Activated naive CD4-positive, alpha-beta T cell treated with anti-CD3 and anti-CD28 coated beads for 36 hours (primary cell): ENCODE measurements at regions of chr14 and their contacts with region 1.

Region 1: GRCh38 chr14:71555654-71556559 is 376.3 kb upstream of the RGS6 start:
- DNase-seq: peak; percentile 80
- H3K4me3 Mint-ChIP-seq: peak overlapping the region; percentile 56
- H3K27ac Mint-ChIP-seq: peak overlapping the region; percentile 93
- H3K4me1 Mint-ChIP-seq: peaks cover 71% of the 10 kb centered on the region
- H3K27me3 Mint-ChIP-seq: no peaks in the 10 kb centered on the region

Region 2: GRCh38 chr14:70655110-70655826 is 900.6 kb before region 1 on chr14:
- CTCF ChIA-PET with region 1: no interaction called
- intact Hi-C with region 1: loop called (anchors 10 kb)
- DNase-seq: peak; percentile 92
- H3K4me3 Mint-ChIP-seq: peak overlapping the region; percentile 83
- H3K27ac Mint-ChIP-seq: peak overlapping the region; percentile 98
- H3K4me1 Mint-ChIP-seq: peaks cover 81% of the 10 kb centered on the region
- H3K27me3 Mint-ChIP-seq: no peaks in the 10 kb centered on the region

Region 3: GRCh38 chr14:71290960-71291466 is 264.9 kb before region 1 on chr14:
- CTCF ChIA-PET with region 1: interaction called, 3 read pairs
- intact Hi-C with region 1: loop called (anchors 1 kb)
- DNase-seq: peak; percentile 67
- H3K4me3 Mint-ChIP-seq: no peak overlapping the region
- H3K27ac Mint-ChIP-seq: no peak overlapping the region
- H3K4me1 Mint-ChIP-seq: peaks cover 16% of the 10 kb centered on the region
- H3K27me3 Mint-ChIP-seq: no peaks in the 10 kb centered on the region

Region 4: DNA sequence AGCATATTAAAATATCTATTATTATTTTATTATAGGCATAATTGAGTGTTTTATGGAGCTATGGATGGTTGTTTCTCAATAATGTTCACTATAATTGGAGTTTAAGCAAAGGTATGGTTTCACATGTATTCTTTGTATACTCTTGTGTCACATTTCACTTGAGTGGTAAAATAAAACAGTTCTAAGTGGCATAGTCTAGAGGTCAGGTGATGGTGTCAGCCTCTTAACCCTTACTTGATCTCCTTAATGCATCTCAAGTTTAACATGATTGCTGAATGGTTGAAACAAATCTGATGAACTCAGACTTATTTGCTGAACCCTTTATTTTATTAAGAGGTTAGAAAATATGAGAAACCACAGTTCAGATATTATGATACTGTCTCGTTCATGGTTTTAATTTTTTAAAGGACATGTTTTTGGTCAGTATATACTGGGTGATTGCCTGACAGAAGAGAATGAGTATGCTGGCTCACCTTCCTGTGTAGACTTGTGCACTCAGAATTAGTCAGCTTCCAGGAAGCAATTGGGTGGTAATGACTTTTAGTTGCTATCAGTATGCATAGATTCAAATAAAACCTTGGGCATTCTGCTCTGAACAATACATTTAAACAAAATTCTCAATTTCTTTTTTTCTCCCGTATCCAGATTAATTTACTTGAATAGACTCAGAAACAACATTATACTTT is 184.1 kb before region 1 on chr14:
- CTCF ChIA-PET with region 1: no interaction called
- intact Hi-C with region 1: loop called (anchors 2 kb)
- DNase-seq: peak; percentile 43
- H3K4me3 Mint-ChIP-seq: no peak overlapping the region
- H3K27ac Mint-ChIP-seq: no peak overlapping the region
- H3K4me1 Mint-ChIP-seq: peaks cover 21% of the 10 kb centered on the region
- H3K27me3 Mint-ChIP-seq: no peaks in the 10 kb centered on the region

Region 5: GRCh38 chr14:71410578-71411284 is 145.2 kb before region 1 on chr14:
- CTCF ChIA-PET with region 1: no interaction called
- intact Hi-C with region 1: loop called (anchors 1 kb)
- DNase-seq: no peak
- H3K4me3 Mint-ChIP-seq: no peak overlapping the region
- H3K27ac Mint-ChIP-seq: peak overlapping the region; percentile 60
- H3K4me1 Mint-ChIP-seq: peaks cover 42% of the 10 kb centered on the region
- H3K27me3 Mint-ChIP-seq: no peaks in the 10 kb centered on the region

Region 6: DNA sequence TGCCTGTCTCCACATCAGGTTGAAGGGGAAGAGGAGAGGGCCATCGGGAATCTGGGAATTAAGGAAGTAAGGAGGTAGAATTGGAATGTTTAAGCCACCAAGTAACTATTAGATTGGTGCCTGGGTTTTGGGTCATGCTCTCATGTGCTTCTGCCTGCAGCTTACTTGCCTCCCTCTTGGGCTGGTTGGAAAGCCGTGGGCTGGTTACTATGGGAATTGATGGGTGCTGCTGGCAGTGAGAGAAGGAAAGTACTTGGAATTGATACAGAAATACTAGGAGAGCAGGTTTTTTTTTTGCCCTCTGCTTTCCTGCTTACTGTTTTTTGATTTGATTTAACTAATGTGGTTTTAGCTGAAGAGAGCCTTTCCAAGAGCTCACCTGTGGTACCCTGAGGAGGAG is 117.2 kb before region 1 on chr14:
- CTCF ChIA-PET with region 1: no interaction called
- intact Hi-C with region 1: no loop called
- DNase-seq: no peak
- H3K4me3 Mint-ChIP-seq: no peak overlapping the region
- H3K27ac Mint-ChIP-seq: no peak overlapping the region
- H3K4me1 Mint-ChIP-seq: peaks cover 4% of the 10 kb centered on the region
- H3K27me3 Mint-ChIP-seq: no peaks in the 10 kb centered on the region

Region 7: DNA sequence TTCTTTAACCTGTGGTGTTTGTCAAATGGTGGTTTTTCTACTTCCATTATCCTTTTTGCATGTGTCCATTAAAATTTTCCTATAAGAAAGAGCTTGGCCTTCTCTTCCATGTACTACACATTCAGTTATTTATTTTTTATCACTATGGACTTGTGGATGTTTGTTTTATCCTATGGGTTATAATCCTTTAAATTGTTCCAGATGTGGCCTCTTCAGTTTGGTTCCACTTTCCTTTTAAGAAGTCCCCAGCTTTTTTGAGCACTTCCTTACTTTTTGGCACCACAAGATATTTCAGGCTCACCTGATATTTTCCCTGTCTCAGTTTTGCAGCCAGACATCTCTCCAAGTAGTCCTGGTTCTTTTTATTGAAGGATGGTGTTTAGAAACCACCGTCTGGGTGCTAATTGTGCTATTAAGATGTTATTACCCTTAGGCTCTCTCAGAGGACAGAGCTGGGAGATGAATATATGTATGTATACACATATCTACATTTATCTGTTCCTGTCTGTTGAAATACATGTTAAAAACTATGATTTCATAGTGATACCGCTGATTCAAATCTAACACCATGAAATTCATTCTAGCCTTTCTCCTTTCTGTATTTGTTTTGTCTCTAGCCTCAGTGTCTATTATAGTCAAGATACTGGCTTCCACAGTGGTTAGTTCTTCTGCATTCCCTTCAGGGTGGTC is 32.1 kb before region 1 on chr14:
- CTCF ChIA-PET with region 1: interaction called, 3 read pairs
- intact Hi-C with region 1: loop called (anchors 1 kb)
- DNase-seq: no peak
- H3K4me3 Mint-ChIP-seq: no peak overlapping the region
- H3K27ac Mint-ChIP-seq: no peak overlapping the region
- H3K4me1 Mint-ChIP-seq: peaks cover 19% of the 10 kb centered on the region
- H3K27me3 Mint-ChIP-seq: no peaks in the 10 kb centered on the region

Region 8: DNA sequence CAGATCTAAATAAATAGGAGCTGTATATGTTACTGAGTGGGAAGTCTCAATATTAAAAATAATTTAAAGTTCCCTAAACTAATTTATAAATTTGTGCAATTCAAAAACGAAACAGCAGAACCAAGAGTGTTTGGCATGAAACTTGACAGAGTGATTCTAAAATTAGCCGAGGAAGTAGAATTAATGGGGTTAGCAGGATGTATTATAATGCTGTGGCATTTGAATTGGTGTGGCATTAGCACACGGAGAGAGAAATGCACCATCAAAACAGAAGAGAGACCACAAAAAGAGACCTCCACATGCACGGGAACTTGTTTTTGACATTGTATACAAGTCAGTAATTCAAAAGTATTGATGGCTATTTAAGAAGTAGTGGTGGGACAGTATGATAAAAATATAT is 10.4 kb after region 1 on chr14:
- CTCF ChIA-PET with region 1: no interaction called
- intact Hi-C with region 1: no loop called
- DNase-seq: no peak
- H3K4me3 Mint-ChIP-seq: no peak overlapping the region
- H3K27ac Mint-ChIP-seq: no peak overlapping the region
- H3K4me1 Mint-ChIP-seq: peaks cover 9% of the 10 kb centered on the region
- H3K27me3 Mint-ChIP-seq: no peaks in the 10 kb centered on the region

Region 9: DNA sequence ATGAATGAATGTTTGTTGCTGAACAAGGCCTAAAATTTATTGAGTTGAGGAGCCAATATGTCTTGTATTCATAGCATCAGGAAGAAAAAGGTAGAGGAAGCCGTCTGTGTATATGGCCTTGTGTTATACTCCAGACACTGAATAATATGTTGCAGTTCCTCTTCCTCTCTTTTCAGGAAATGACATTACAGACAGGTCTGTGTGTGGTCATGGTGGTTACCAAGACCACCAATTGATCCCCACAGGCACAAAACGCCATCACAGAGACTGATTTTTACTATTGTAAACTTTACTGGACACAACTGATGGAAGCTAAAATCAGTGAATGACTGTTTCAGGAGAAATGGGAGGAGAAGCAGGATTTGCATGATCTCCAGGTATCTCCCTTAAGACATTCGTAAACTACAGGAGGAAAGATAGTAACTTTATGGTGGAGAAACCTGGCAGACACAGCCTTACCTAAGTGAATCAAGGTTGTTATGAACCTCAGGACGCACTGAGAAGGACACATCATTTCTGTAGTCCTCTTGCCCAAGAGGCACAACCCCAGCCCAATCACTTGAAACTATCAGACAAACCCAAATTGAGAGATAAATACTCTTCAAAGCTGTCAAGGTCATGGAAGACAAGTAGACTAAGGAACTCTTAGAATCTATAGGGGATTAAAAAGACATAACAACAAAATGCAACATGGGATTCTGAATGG is 42.2 kb after region 1 on chr14:
- CTCF ChIA-PET with region 1: no interaction called
- intact Hi-C with region 1: no loop called
- DNase-seq: no peak
- H3K4me3 Mint-ChIP-seq: no peak overlapping the region
- H3K27ac Mint-ChIP-seq: no peak overlapping the region
- H3K4me1 Mint-ChIP-seq: peaks cover 51% of the 10 kb centered on the region
- H3K27me3 Mint-ChIP-seq: no peaks in the 10 kb centered on the region

Region 10: GRCh38 chr14:72523424-72524294 is 967.8 kb after region 1 on chr14:
- CTCF ChIA-PET with region 1: no interaction called
- intact Hi-C with region 1: loop called (anchors 5 kb)
- DNase-seq: no peak
- H3K4me3 Mint-ChIP-seq: no peak overlapping the region
- H3K27ac Mint-ChIP-seq: no peak overlapping the region
- H3K4me1 Mint-ChIP-seq: peaks cover 44% of the 10 kb centered on the region
- H3K27me3 Mint-ChIP-seq: no peaks in the 10 kb centered on the region